WTC11 (cell line): ENCODE measurements at regions of chr12 and their contacts with region 1.

Region 1: GRCh38 chr12:100404769-100405407 is 48.0 kb downstream of the SLC17A8 start:
- DNase-seq: peak; percentile 87
- ATAC-seq: peak; percentile 98
- H3K4me3 Mint-ChIP-seq: no peak overlapping the region
- H3K27ac Mint-ChIP-seq: no peak overlapping the region
- H3K4me1 Mint-ChIP-seq: peaks cover 17% of the 10 kb centered on the region
- H3K27me3 Mint-ChIP-seq: no peaks in the 10 kb centered on the region
- CTCF ChIP-seq: peak; percentile 77

Region 2: DNA sequence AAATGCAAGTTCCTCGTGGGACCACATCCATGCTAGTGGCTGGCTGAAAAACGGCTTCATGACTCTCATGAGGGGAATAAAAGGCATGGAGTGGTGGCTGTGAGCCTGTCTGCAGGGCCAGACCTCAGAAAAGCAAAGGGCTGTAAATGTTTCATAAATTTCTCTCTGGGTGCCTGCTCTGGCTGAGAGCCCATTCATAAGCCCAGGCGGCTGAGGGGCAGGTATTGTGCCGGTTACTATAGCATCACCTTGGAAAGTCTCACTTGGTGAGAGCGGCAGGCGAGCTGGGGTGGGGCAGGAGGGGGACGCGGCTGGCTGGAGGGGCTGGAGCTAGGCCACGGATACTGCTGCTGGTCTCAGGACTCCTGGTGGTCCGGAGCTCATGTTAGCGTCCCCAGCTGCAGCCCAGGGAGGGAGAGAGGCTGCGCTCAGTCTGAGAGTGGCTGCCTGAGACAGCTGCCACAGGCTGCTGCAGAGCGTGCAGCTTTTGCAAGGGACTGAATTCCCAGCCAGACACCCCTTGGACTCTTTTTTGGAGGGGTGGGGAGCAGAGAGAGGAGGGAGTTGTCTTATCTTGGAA is 48.2 kb before region 1 on chr12 and contains the start of gene SLC17A8:
- CTCF ChIA-PET with region 1: interaction called, 104 read pairs
- POLR2A ChIA-PET with region 1: no interaction called
- DNase-seq: peak; percentile 64
- ATAC-seq: peak; percentile 98
- H3K4me3 Mint-ChIP-seq: peak within 1 kb of the TSS; percentile 43
- H3K27ac Mint-ChIP-seq: no peak within 1 kb of the TSS
- H3K4me1 Mint-ChIP-seq: peaks cover 24% of the 10 kb centered on the region
- H3K27me3 Mint-ChIP-seq: no peaks in the 10 kb centered on the region; the same call in 1 of the 2 replicates
- CTCF ChIP-seq: no peak
- total RNA-seq, gene SLC17A8: 0.05 to 0.26 TPM in 2 of 3 replicates, not detected in the other

Region 3: GRCh38 chr12:100382338-100382737 is 22.6 kb before region 1 on chr12:
- CTCF ChIA-PET with region 1: interaction called, 24 read pairs
- POLR2A ChIA-PET with region 1: no interaction called
- DNase-seq: no peak
- ATAC-seq: no peak
- H3K4me3 Mint-ChIP-seq: no peak overlapping the region
- H3K27ac Mint-ChIP-seq: no peak overlapping the region
- H3K4me1 Mint-ChIP-seq: peaks cover 9% of the 10 kb centered on the region
- H3K27me3 Mint-ChIP-seq: no peaks in the 10 kb centered on the region
- CTCF ChIP-seq: no peak

Region 4: DNA sequence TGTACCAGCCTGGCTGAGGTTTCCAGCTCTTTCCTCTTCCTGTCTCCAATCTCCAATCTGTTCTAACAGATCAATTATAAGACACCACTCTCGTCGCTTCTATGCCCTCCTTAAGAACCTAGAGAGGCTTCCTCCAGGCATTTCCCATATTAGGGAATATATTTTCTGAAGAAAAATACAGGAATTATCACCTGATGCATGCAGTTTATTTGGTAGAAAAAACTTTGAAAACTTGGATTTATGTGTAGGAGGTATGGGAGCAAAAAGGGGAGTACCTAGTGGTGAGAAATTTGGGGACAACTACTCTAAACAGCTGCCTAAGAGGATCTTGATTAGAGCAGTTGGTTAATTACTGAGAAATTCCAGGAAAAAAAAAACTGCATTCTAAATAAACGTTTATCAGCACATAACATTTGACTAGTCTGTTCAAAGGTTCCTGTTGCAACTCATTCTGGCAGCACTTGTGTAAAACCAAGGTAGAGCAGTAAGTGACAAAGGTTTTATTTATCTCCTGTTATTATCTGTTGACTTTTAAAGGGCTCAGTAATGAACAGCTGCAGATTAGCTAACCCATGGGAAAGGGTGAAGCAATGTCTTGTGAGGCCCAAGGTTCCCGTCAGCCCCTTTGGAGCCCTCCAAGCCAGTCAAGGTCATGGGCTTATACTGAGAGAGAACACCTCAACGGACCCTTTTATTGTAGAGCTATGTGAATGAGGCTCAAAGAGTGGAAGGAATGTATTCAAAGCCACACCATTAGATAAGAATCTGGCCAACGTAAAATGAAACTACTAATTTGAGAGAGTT is 32.4 kb after region 1 on chr12:
- CTCF ChIA-PET with region 1: interaction called, 18 read pairs
- POLR2A ChIA-PET with region 1: no interaction called
- DNase-seq: no peak
- ATAC-seq: no peak
- H3K4me3 Mint-ChIP-seq: no peak overlapping the region
- H3K27ac Mint-ChIP-seq: no peak overlapping the region
- H3K4me1 Mint-ChIP-seq: peaks cover 6% of the 10 kb centered on the region
- H3K27me3 Mint-ChIP-seq: no peaks in the 10 kb centered on the region; the same call in 1 of the 2 replicates
- CTCF ChIP-seq: no peak

Region 5: DNA sequence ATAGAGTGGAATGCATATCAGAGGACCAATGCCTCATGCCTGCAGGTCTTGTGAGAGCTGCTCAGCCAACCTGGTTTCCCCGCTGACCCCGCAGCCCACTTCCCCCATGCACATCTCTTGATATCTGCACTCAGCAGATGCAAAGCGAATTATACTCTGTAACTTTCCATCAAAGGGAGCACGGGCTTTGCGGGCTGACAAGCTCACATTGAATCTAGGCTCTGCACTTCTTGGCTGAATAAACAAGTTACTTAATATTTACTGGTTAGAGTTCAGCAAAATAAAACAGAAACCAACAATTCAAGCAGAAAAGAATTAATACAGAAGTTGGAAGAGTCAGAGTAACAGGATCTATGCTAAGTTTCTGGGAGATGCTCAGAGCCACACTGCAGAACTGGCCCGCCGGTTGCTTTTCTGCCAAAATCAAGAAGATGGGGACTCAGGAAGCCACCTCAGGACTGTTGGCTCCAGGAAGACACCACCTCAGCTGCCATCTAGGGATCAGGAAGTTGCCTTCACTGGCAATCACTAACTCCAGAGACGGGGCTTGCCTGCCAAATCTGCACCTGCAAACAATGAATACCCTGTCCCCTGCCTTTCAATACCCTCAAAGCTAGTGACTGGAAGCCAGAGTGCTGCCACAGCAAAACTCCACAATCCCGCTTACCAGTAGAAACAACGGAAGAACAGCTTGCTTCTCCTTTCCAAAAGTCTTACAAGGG is 115.3 kb after region 1 on chr12:
- CTCF ChIA-PET with region 1: interaction called, 11 read pairs
- POLR2A ChIA-PET with region 1: no interaction called
- DNase-seq: no peak
- ATAC-seq: no peak; the same call in 1 of the 2 replicates
- H3K4me3 Mint-ChIP-seq: no peak overlapping the region
- H3K27ac Mint-ChIP-seq: no peak overlapping the region
- H3K4me1 Mint-ChIP-seq: peaks cover 5% of the 10 kb centered on the region
- H3K27me3 Mint-ChIP-seq: no peaks in the 10 kb centered on the region
- CTCF ChIP-seq: no peak

Region 6: DNA sequence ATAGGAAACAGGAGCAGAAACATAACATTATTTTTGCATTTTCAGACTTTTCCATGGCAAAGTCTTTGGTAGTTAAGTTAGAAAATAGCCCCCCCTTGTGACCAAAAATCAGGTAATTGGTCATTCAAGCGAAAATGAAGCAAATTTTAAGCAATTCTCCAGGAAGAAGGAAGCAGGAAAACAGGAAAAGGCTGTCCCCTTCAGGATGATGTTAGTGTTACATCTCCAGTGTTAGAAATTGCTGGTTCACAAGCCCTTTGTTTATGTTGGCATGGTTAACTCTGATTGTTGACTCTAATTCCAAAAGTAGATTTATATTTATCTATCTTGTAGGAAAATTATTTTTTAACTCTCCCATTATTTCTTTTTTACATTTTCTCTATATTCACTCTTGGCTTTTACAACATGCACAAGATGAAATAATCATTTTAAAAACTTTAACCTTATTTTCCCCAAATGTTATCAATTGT is 149.8 kb after region 1 on chr12:
- CTCF ChIA-PET with region 1: interaction called, 46 read pairs
- POLR2A ChIA-PET with region 1: no interaction called
- DNase-seq: no peak
- ATAC-seq: peak; percentile 89
- H3K4me3 Mint-ChIP-seq: no peak overlapping the region
- H3K27ac Mint-ChIP-seq: no peak overlapping the region
- H3K4me1 Mint-ChIP-seq: peaks cover 5% of the 10 kb centered on the region; the same call in 1 of the 2 replicates
- H3K27me3 Mint-ChIP-seq: no peaks in the 10 kb centered on the region
- CTCF ChIP-seq: peak; percentile 84